PC-9 (cell line): ENCODE measurements at regions of chr1 and their contacts with region 1.

Region 1: DNA sequence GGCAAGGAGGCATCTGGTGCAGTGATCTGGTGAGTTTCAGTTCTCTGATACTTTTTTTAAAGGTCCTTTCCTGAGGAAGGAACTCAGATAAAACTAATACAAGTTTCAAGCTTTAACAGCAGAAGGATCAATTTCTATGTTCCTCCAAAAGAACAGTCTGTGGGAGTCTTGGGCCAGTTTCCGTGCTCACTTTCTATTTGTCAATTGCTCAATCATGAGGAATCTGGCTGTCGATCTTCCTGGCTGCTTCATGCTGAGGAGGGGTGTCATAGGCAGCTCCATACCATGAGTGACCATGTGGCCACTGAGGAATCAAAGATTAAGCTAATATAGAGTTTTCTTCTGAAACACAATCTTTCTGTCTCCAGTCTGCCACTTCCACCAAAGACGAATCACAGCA is 11.4 kb upstream of the TMEM125 start:
- DNase-seq: no peak
- H3K4me3 ChIP-seq: no peak overlapping the region
- H3K27ac ChIP-seq: no peak overlapping the region
- H3K4me1 ChIP-seq: peaks cover 14% of the 10 kb centered on the region
- H3K27me3 ChIP-seq: no peaks in the 10 kb centered on the region
- CTCF ChIP-seq: no peak

Region 2: GRCh38 chr1:43324810-43325209 is 66.4 kb after region 1 on chr1:
- CTCF ChIA-PET with region 1: no interaction called
- POLR2A ChIA-PET with region 1: no interaction called
- intact Hi-C with region 1: no loop called
- DNase-seq: no peak
- H3K4me3 ChIP-seq: no peak overlapping the region
- H3K27ac ChIP-seq: no peak overlapping the region
- H3K4me1 ChIP-seq: peaks cover 4% of the 10 kb centered on the region
- H3K27me3 ChIP-seq: no peaks in the 10 kb centered on the region
- CTCF ChIP-seq: no peak

Region 3: DNA sequence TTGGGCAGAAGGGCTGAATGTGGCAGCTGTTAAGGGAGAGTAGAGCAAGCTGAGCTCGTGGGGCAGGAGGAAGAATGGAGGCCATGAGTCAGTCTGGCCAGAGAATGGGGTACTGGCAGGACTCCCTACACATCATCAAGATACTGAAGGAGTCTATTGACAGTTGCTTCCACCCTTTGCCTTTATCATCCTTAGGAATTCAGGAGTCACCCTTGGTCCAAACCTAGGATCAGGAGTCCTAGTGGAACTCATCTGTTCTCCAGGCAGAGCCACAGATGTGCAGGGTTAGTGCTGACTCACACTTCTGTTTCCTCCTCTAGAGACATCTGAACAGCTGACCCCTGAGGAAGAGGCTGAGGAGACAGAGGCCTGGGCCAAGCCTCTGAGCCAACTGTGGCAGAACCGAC is 430.2 kb after region 1 on chr1:
- CTCF ChIA-PET with region 1: interaction called, 13 read pairs
- POLR2A ChIA-PET with region 1: no interaction called
- intact Hi-C with region 1: no loop called
- DNase-seq: no peak
- H3K4me3 ChIP-seq: no peak overlapping the region
- H3K27ac ChIP-seq: no peak overlapping the region
- H3K4me1 ChIP-seq: no peaks in the 10 kb centered on the region
- H3K27me3 ChIP-seq: no peaks in the 10 kb centered on the region
- CTCF ChIP-seq: no peak